Psoas muscle (tissue), 8 donors: ENCODE measurements at regions of chr2 and their contacts with region 1.

Region 1: DNA sequence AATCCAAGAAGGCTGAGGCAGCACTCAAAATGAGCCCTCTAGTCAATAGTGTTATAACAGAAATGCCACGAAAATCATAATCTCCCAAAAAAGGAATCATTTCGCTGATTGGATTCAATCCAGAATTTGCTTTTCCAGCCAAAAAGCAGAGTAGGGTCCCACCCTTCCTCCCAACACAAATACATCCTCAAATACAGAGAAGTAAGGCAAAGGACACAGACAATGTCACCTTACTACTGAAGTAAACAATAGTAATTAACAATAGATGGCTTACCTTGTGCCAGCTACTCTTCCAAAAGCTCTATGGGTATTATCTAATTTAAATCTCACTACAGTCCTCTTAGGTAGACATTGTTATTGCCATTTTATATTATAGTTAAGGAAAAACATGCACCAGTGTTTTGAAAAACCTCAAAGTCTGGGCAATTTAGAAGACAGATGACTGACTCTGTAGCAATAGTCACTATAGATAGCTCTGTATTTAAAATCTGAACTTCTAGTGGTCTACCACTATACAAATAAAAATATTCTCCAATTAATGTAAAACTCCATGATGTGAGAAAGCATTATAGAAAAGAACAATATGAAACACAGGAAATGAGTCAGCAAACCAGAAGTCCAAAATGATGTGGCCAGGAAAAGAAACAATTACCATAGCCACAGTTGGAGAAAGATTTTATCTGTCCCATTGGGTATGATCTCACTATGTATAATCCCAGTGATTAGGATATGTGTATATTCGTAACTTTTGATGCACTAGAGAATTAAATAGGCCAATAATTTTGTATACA is 305.0 kb upstream of the ERBB4 start:
- DNase-seq: no peak
- ATAC-seq: no peak
- H3K4me3 ChIP-seq: no peak overlapping the region
- H3K27ac ChIP-seq: no peak overlapping the region
- H3K4me1 ChIP-seq: no peaks in the 10 kb centered on the region
- H3K27me3 ChIP-seq: no peaks in the 10 kb centered on the region
- CTCF ChIP-seq: no peak

Region 2: GRCh38 chr2:212667751-212668316 is 175.8 kb before region 1 on chr2:
- intact Hi-C with region 1: no loop called
- DNase-seq: no peak
- ATAC-seq: no peak
- H3K4me3 ChIP-seq: no peak overlapping the region
- H3K27ac ChIP-seq: no peak overlapping the region
- H3K4me1 ChIP-seq: no peaks in the 10 kb centered on the region
- H3K27me3 ChIP-seq: no peaks in the 10 kb centered on the region
- CTCF ChIP-seq: no peak

Region 3: DNA sequence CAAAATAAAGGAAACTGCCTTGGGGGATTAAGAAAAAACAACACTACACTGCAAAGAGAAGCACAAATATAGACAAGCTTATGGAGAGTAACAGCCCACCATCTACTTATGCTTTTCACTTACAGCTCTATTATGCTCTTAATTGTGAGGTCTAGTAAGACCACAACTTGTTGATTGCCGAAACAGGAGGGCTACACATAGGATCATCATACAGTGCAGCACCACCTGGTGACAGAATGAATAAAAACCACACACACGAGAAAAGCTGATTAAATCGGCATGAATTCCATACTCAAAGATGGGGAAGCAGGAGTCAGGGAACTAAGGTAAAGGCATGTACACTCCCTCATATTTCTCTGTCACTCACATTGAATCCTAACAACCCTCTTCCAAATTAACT is 48.6 kb after region 1 on chr2:
- intact Hi-C with region 1: loop called in 1 of 2 experiments (anchors 10 kb)
- DNase-seq: no peak
- ATAC-seq: no peak
- H3K4me3 ChIP-seq: no peak overlapping the region
- H3K27ac ChIP-seq: no peak overlapping the region
- H3K4me1 ChIP-seq: peaks cover 6% of the 10 kb centered on the region
- H3K27me3 ChIP-seq: no peaks in the 10 kb centered on the region
- CTCF ChIP-seq: peak; percentile 21